Natural killer cell (primary cell): ENCODE measurements at regions of chr2 and their contacts with region 1.

Region 1: GRCh38 chr2:213104092-213104902 is 47.1 kb downstream of the IKZF2 start:
- DNase-seq: peak in 1 of 2 donors; percentile 47
- ATAC-seq: peak; percentile 76 to 81 (median 79)
- H3K4me3 ChIP-seq: peak overlapping the region; percentile 11
- H3K4me3 Mint-ChIP-seq: peak overlapping the region; percentile 84
- H3K27ac ChIP-seq: peak overlapping the region; percentile 74
- H3K27ac Mint-ChIP-seq: peak overlapping the region; percentile 74 to 84
- H3K4me1 ChIP-seq: peaks cover 18% of the 10 kb centered on the region
- H3K4me1 Mint-ChIP-seq: peaks cover 62 to 73% of the 10 kb centered on the region in 2 donors
- H3K27me3 ChIP-seq: no peaks in the 10 kb centered on the region
- H3K27me3 Mint-ChIP-seq: no peaks in the 10 kb centered on the region
- CTCF ChIP-seq: no peak

Region 2: DNA sequence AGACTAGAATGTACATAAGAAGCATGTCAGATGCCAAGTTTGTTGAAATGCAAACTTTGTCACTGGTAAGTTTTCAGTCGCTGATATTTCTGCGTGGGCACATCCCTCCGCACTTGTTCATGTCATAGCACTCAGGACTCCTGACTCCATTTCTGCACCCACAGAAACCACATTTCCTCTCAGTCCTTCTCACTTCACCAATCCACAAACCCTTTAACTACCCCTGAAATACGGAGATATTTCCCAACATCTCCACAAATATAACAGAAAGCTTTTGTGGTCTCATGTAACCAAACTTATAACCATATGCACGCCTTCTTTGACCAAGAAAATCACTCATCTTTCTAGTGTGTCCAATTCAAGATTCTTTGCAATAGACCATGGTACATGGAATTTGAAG is 288.8 kb before region 1 on chr2:
- intact Hi-C with region 1: loop called (anchors 5 kb)
- DNase-seq: peak in 1 of 2 donors; percentile 38
- ATAC-seq: peak; percentile 43 to 75 (median 61)
- H3K4me3 ChIP-seq: no peak overlapping the region
- H3K4me3 Mint-ChIP-seq: peak overlapping the region; percentile 75
- H3K27ac ChIP-seq: peak overlapping the region; percentile 77
- H3K27ac Mint-ChIP-seq: peak overlapping the region; percentile 91
- H3K4me1 ChIP-seq: peaks cover 30% of the 10 kb centered on the region
- H3K4me1 Mint-ChIP-seq: peaks cover 78 to 79% of the 10 kb centered on the region in 2 donors
- H3K27me3 ChIP-seq: no peaks in the 10 kb centered on the region
- H3K27me3 Mint-ChIP-seq: no peaks in the 10 kb centered on the region
- CTCF ChIP-seq: no peak

Region 3: GRCh38 chr2:212958757-212959295 is 145.5 kb before region 1 on chr2:
- intact Hi-C with region 1: loop called (anchors 5 kb)
- DNase-seq: peak in 1 of 2 donors; percentile 27
- ATAC-seq: peak; percentile 48 to 60 (median 52)
- H3K4me3 ChIP-seq: no peak overlapping the region
- H3K4me3 Mint-ChIP-seq: peak overlapping the region; percentile 89
- H3K27ac ChIP-seq: peak overlapping the region; percentile 70
- H3K27ac Mint-ChIP-seq: peak overlapping the region; percentile 89 to 92
- H3K4me1 ChIP-seq: peaks cover 21% of the 10 kb centered on the region
- H3K4me1 Mint-ChIP-seq: peaks cover 64 to 73% of the 10 kb centered on the region in 2 donors
- H3K27me3 ChIP-seq: no peaks in the 10 kb centered on the region
- H3K27me3 Mint-ChIP-seq: no peaks in the 10 kb centered on the region
- CTCF ChIP-seq: no peak

Region 4: DNA sequence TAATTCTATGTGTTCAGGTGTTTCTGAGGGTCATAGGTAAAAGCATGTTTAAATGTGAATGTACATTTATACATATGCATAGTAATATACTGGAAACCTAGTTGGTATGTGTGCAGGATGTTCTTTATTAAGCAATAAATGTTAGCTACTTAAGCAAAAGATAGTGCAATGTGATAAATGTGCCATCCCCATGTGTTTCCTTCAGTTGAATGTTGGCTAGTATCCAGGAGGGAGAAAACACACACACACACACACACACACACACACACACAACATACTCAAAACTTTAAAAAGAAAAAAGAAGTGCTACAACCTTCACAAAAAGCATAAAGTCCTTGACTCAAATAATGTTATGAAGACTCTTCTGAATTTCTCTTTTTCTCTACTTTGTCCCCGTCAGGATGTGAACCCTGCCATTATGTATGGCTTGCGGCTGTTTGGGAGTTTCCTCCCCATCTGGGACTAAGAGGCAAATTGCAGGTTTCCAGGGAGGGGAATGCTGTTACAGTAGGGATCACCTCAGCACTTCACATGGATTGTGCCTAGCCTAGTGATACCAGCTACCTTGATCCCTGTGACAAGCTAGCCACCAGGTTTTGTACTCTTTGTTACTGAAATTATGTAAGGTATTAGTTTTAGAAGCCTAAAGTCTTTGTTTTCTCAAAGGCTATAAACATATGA is 35.5 kb before region 1 on chr2:
- intact Hi-C with region 1: loop called (anchors 2 kb)
- DNase-seq: no peak
- ATAC-seq: no peak
- H3K4me3 ChIP-seq: no peak overlapping the region
- H3K4me3 Mint-ChIP-seq: no peak overlapping the region
- H3K27ac ChIP-seq: no peak overlapping the region
- H3K27ac Mint-ChIP-seq: peak overlapping the region in 1 of 2 donors; percentile 80
- H3K4me1 ChIP-seq: peaks cover 4% of the 10 kb centered on the region
- H3K4me1 Mint-ChIP-seq: peaks cover 81 to 91% of the 10 kb centered on the region in 2 donors
- H3K27me3 ChIP-seq: no peaks in the 10 kb centered on the region
- H3K27me3 Mint-ChIP-seq: no peaks in the 10 kb centered on the region
- CTCF ChIP-seq: no peak

Region 5: DNA sequence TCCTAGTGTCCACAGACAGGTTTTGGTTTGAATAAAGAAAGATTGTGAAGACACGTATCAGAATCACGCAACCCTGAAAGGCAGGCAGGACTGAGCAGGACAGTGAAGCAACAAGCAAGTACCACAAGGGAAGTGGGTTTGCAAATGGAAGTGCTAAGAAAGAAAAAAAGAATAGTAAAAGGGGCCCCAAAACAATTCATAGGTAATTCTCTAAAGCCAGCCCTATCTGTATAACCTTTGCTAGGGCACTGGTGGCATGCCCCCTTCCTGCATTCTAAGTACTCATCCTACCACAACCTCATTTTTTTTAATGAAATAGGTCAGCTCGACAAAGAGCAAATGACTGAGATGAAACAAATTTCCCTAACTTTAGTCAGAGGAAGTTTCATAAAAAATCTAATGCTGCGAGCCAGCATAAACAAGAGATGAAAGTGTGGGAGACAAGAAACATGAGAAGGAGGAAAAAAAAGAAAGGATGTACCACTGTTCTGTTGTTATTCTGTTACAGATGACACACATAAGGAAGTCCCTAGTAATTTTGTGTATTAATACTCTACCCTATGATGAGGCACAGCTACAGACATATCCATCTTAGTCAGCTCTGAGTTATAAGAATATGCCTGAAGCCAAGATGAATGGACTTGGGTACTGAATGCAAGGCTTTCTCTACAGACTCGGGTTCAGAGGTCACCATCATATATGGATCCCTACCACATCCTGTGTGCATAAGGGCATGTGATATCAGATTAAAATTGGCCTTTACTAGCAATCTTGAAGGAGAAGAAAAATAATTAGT is 15.0 kb after region 1 on chr2:
- intact Hi-C with region 1: loop called (anchors 1 kb)
- DNase-seq: peak; percentile 20 to 57
- ATAC-seq: peak; percentile 82 to 83 (median 82)
- H3K4me3 ChIP-seq: no peak overlapping the region
- H3K4me3 Mint-ChIP-seq: peak overlapping the region; percentile 85
- H3K27ac ChIP-seq: peak overlapping the region; percentile 82
- H3K27ac Mint-ChIP-seq: peak overlapping the region; percentile 95 to 99
- H3K4me1 ChIP-seq: peaks cover 27% of the 10 kb centered on the region
- H3K4me1 Mint-ChIP-seq: peaks cover 67 to 74% of the 10 kb centered on the region in 2 donors
- H3K27me3 ChIP-seq: no peaks in the 10 kb centered on the region
- H3K27me3 Mint-ChIP-seq: no peaks in the 10 kb centered on the region
- CTCF ChIP-seq: no peak

Region 6: GRCh38 chr2:213157242-213157641 is 52.9 kb after region 1 on chr2:
- intact Hi-C with region 1: no loop called
- DNase-seq: peak in 1 of 2 donors; percentile 65
- ATAC-seq: peak; percentile 52 to 59 (median 54)
- H3K4me3 ChIP-seq: no peak overlapping the region
- H3K4me3 Mint-ChIP-seq: no peak overlapping the region
- H3K27ac ChIP-seq: peak overlapping the region; percentile 60
- H3K27ac Mint-ChIP-seq: no peak overlapping the region
- H3K4me1 ChIP-seq: no peaks in the 10 kb centered on the region
- H3K4me1 Mint-ChIP-seq: peaks cover 18 to 19% of the 10 kb centered on the region in 2 donors
- H3K27me3 ChIP-seq: no peaks in the 10 kb centered on the region
- H3K27me3 Mint-ChIP-seq: no peaks in the 10 kb centered on the region
- CTCF ChIP-seq: no peak